ENCODE measurements at regions of chr18 and their contacts with region 1.

Region 1: GRCh38 chr18:72762515-72763122 is 105.2 kb downstream of the NETO1 start:
- DNase-seq: no peak
- ATAC-seq: no peak
- H3K4me3 ChIP-seq: no peak overlapping the region
- H3K27ac ChIP-seq: no peak overlapping the region
- H3K4me1 ChIP-seq: no peaks in the 10 kb centered on the region
- H3K27me3 ChIP-seq: no peaks in the 10 kb centered on the region

Region 2: DNA sequence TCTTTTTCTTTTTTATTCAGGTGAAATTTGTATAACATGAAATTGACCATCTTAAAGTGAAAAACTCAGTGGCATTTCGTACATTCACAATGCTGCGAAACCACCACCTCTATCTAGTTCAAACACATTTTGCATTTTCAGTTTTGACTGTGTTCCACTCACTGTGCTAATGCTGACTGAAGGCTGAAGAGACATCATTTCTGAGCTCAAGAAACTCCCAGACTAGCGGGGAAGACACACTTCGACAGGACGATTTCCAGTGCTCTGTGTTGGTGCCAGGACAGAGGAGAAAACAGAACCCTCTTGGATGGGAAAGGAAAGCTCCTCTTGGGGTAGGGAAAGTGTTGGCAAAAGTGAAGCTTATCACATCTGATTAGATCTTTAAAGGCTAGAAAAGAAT is 174.3 kb before region 1 on chr18:
- intact Hi-C with region 1: no loop called
- DNase-seq: no peak
- ATAC-seq: peak in 1 of 2 donors; percentile 70
- H3K4me3 ChIP-seq: no peak overlapping the region
- H3K27ac ChIP-seq: no peak overlapping the region
- H3K4me1 ChIP-seq: no peaks in the 10 kb centered on the region
- H3K27me3 ChIP-seq: no peaks in the 10 kb centered on the region

Region 3: GRCh38 chr18:73136134-73136533 is 373.5 kb after region 1 on chr18:
- intact Hi-C with region 1: loop called in 2 of 4 experiments (anchors 10 kb)
- DNase-seq: no peak
- ATAC-seq: no peak
- H3K4me3 ChIP-seq: no peak overlapping the region
- H3K27ac ChIP-seq: no peak overlapping the region
- H3K4me1 ChIP-seq: no peaks in the 10 kb centered on the region
- H3K27me3 ChIP-seq: no peaks in the 10 kb centered on the region

Region 4: DNA sequence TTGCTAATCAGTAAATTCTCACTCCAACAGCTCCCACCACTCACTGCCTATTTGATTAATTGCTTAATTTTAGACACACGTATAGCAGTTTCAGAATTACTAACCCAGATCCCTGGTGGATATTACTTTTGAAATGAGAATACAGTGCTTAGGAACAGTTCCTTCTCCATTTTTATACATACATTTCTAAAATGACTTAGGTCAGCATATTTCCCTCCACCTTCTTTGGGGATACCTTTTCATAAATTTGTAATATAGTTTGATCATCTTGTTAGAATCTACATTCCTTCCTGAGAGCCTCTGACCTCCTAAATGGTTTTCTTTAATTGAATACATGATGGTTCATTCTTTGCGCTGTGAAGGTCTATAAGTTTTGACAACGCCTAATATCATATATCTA is 385.0 kb after region 1 on chr18:
- intact Hi-C with region 1: loop called in 1 of 4 experiments (anchors 10 kb)
- DNase-seq: no peak
- ATAC-seq: no peak
- H3K4me3 ChIP-seq: no peak overlapping the region
- H3K27ac ChIP-seq: no peak overlapping the region
- H3K4me1 ChIP-seq: no peaks in the 10 kb centered on the region
- H3K27me3 ChIP-seq: no peaks in the 10 kb centered on the region

Region 5: GRCh38 chr18:73842795-73843394 is 1080.3 kb after region 1 on chr18:
- intact Hi-C with region 1: loop called in 3 of 4 experiments (anchors 5 to 10 kb)
- DNase-seq: peak in 2 of 3 donors; percentile 26 to 67
- ATAC-seq: no peak
- H3K4me3 ChIP-seq: no peak overlapping the region
- H3K27ac ChIP-seq: no peak overlapping the region
- H3K4me1 ChIP-seq: no peaks in the 10 kb centered on the region
- H3K27me3 ChIP-seq: no peaks in the 10 kb centered on the region

Region 6: GRCh38 chr18:74116633-74117554 is 1354.3 kb after region 1 on chr18:
- intact Hi-C with region 1: loop called in 1 of 4 experiments (anchors 10 kb)
- DNase-seq: no peak
- ATAC-seq: peak in 1 of 2 donors; percentile 45
- H3K4me3 ChIP-seq: no peak overlapping the region
- H3K27ac ChIP-seq: no peak overlapping the region
- H3K4me1 ChIP-seq: no peaks in the 10 kb centered on the region
- H3K27me3 ChIP-seq: no peaks in the 10 kb centered on the region